AG04449 (cell line): ENCODE measurements at regions of chr3 and their contacts with region 1.

Region 1: DNA sequence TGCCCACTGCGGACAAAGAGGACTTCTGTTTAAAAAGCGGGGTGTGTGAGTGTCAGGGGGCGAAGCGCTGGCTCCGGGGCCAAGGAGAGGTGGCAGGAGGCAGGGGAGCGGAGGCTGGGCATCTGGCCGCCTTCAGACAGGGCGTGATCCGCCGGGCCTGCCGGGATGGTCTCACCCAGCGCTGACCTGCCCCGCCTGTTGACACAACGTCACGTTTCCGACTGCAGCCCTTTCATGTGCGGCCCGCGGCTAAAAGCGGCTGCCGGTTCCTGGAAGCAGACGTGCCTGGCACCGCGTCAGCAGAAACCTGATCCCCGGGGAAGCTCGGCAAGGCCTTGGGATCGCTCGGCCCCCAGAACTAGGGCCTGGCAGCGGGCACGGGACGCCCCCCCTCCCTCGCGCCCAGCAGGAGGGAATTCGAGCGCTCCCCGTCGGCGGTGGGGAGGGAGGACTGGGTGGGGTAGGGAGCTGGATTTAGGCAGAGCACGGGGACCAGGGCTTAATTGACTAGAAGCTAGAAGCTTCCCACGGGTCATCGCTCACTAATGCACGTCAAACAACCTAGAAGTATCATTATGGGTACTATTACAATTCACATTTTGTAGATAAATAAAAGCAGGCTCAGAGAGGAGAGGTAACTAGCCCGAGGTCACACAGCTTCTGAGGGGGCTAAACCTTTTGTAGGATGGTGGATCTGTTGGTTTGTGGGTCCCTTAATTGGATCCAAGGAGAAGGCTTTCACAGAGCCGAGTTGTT is 7.7 kb downstream of the BHLHE40 start:
- DNase-seq: peak; percentile 92
- H3K4me3 ChIP-seq: peak overlapping the region; percentile 45
- CTCF ChIP-seq: no peak

Region 2: DNA sequence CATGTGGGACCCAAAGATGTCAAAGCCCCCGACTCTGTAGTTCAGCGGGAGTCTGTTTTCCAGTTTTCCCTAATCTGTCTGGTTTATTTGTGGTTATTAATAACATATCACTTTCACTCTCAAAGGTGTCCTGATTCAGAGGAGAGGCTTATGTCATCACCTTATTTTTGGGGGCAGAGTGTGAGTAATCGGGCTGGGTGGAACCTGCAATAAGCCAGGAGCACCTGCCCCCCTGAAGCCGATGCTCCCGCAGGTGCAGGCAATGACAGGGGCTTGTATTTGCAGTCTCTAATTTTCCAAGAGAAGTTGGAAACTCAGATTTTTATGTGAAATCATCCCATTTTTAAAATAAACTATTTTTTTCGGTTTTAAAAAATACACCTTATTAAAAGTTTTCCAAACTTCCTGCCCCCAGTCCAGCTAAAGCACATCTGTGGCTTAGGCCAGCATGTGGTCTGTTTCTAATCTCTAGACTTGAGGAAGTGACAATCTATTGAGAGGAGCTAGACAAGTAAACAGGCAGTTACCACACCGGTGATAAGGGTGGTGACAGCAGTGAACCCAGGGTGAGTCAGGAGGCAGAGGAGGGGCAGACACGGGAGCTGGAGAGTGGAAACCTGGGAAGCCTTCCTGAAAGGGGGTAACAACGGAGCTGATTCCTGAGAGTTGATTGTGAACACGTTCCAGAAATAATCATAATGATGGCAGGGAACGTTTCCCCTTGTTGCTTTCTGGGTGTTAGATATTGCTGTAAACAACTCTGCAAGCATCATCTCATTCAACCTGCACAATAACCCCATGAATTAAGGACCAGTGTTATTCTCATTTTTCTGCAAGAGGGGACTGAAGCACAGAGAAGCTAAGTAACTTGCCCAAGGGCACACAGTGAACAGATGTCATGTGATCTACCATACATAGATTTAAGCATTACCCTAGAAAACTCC is 29.5 kb after region 1 on chr3:
- CTCF ChIA-PET with region 1: interaction called, 39 read pairs
- POLR2A ChIA-PET with region 1: interaction called, 44 read pairs
- DNase-seq: no peak
- H3K4me3 ChIP-seq: no peak overlapping the region
- CTCF ChIP-seq: no peak

Region 3: GRCh38 chr3:5026331-5027218 is 39.6 kb after region 1 on chr3:
- CTCF ChIA-PET with region 1: interaction called, 39 read pairs
- POLR2A ChIA-PET with region 1: interaction called, 44 read pairs
- DNase-seq: peak; percentile 67
- H3K4me3 ChIP-seq: peak overlapping the region; percentile 59
- CTCF ChIP-seq: peak; percentile 84